T-cell (primary cell): ENCODE measurements at regions of chr12 and their contacts with region 1.

Region 1: DNA sequence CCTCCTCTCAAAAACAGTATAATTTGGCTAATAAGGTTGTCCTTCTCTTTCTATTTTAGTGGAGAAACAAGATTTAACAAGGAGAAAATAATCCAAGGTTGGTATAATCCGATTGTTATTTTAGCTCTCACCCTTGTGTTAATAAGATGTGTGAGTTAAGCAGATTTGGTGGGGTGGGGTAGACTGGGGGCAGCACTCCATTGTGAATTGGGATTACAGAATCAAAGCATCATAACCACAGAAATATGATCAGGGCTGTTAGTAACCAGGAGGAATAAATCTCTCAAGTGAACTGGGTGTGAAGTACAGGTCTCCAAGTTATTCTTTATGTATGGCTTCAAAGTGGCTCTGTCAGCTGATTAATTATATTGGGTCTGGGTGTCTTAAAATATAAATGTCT is 10.2 kb downstream of the TIGAR start:
- DNase-seq: no peak
- ATAC-seq: no peak
- H3K4me3 ChIP-seq: no peak overlapping the region
- H3K4me3 Mint-ChIP-seq: no peak overlapping the region
- H3K27ac ChIP-seq: no peak overlapping the region
- H3K27ac Mint-ChIP-seq: no peak overlapping the region
- H3K4me1 ChIP-seq: no peaks in the 10 kb centered on the region
- H3K4me1 Mint-ChIP-seq: peaks cover 11 to 21% (median 17%) of the 10 kb centered on the region in 3 donors
- H3K27me3 ChIP-seq: no peaks in the 10 kb centered on the region
- H3K27me3 Mint-ChIP-seq: no peaks in the 10 kb centered on the region

Region 2: DNA sequence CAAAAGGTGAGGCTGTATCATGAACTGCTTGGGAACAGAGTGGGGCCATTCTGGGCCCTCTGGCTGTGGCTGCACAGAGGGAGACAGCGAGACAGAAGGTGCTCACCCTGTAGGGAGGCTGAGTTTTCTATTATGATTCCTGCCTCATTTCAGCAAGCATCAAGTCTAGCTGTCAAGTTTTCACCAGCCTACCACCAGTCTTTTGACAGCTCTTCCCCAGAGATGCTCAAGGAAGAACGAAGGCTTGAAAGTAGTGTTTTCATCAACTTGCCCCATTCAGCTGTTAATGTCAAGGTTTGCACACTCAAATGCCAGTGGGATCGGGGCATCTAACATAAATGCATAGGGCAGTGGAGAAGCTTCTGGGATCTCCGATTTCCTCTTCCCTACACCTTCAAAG is 38.3 kb after region 1 on chr12:
- CTCF ChIA-PET with region 1: interaction called in 1 of 2 experiments, 3 read pairs
- POLR2A ChIA-PET with region 1: interaction called in 1 of 2 experiments, 11 read pairs
- DNase-seq: no peak
- ATAC-seq: no peak
- H3K4me3 ChIP-seq: no peak overlapping the region
- H3K4me3 Mint-ChIP-seq: no peak overlapping the region
- H3K27ac ChIP-seq: no peak overlapping the region
- H3K27ac Mint-ChIP-seq: no peak overlapping the region
- H3K4me1 ChIP-seq: no peaks in the 10 kb centered on the region
- H3K4me1 Mint-ChIP-seq: no peaks in the 10 kb centered on the region
- H3K27me3 ChIP-seq: peaks cover 0 to 15% of the 10 kb centered on the region in 2 experiments
- H3K27me3 Mint-ChIP-seq: peaks cover 23 to 30% of the 10 kb centered on the region in 2 donors

Region 3: GRCh38 chr12:5522432-5523335 is 1191.5 kb after region 1 on chr12:
- CTCF ChIA-PET with region 1: no interaction called
- POLR2A ChIA-PET with region 1: no interaction called
- DNase-seq: no peak
- ATAC-seq: no peak
- H3K4me3 ChIP-seq: no peak overlapping the region
- H3K4me3 Mint-ChIP-seq: no peak overlapping the region
- H3K27ac ChIP-seq: no peak overlapping the region
- H3K27ac Mint-ChIP-seq: no peak overlapping the region
- H3K4me1 ChIP-seq: no peaks in the 10 kb centered on the region
- H3K4me1 Mint-ChIP-seq: no peaks in the 10 kb centered on the region
- H3K27me3 ChIP-seq: peaks cover 0 to 10% of the 10 kb centered on the region in 2 experiments
- H3K27me3 Mint-ChIP-seq: peaks cover 0 to 3% of the 10 kb centered on the region in 2 donors